Activated CD4-positive, alpha-beta T cell treated with anti-CD3 and anti-CD28 coated beads, Interleukin-2, amount 10 ng/mL, durations not matched to agents 7 days and 5 days (primary cell): ENCODE measurements at regions of chr7 and their contacts with region 1.

Region 1: GRCh38 chr7:100190048-100190711 is 12.5 kb downstream of the STAG3 start:
- DNase-seq: peak; percentile 43
- H3K4me3 Mint-ChIP-seq: no peak overlapping the region
- H3K27ac Mint-ChIP-seq: peak overlapping the region; percentile 83
- H3K4me1 Mint-ChIP-seq: peaks cover 50% of the 10 kb centered on the region
- H3K27me3 Mint-ChIP-seq: no peaks in the 10 kb centered on the region

Region 2: GRCh38 chr7:100044701-100045100 is 145.5 kb before region 1 on chr7:
- CTCF ChIA-PET with region 1: no interaction called
- POLR2A ChIA-PET with region 1: no interaction called
- DNase-seq: peak; percentile 25
- H3K4me3 Mint-ChIP-seq: no peak overlapping the region
- H3K27ac Mint-ChIP-seq: no peak overlapping the region
- H3K4me1 Mint-ChIP-seq: peaks cover 28% of the 10 kb centered on the region
- H3K27me3 Mint-ChIP-seq: no peaks in the 10 kb centered on the region

Region 3: DNA sequence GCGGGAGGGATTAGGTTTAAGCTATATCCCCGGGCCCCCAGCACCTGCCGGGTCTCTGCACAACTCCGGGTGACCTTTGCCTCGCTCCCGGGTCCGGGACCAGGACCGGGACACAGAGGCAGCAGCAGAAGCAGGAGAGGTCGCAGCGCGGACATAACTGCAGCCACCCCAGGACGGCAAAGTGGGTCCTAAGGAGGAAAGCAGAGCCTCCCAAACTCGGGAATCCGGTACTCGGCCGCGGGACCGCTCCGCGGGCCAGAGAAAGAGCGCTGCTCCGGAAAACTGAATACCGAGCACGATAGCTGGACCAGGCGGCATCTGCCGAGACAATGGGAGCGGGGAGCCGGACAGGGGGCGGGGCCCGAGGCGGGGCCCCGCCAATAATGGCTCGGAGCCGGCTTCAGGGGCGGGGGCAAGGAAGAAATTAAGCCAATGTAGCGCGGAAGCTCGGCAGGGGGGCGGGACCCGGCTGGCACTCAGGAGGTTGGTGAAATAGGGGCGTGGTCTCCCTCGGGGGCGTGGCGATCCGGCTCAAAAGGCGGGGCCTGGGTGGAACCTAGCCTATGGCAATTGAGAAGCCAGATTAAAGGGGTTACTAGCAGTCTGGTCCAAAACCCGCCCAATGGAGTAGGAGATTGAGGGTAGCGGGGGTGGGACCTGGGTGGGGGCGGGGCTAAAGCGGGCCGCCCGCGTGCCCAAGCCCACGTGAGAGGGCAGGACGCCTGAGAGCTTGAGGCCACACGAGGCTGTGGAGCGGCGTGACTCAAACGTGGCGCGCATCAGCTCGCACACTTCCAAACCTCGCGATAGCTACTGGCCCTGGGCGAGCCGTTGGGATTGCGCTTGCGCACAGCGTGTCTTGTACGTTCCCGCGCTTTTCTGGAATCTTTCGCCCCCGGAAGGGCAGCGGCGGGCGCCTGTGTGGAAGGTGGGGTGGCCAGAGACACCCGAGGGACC is 12.9 kb before region 1 on chr7 and contains the starts of genes GPC2 and STAG3:
- CTCF ChIA-PET with region 1: interaction called, 10 read pairs
- POLR2A ChIA-PET with region 1: no interaction called
- DNase-seq: peak; percentile 98
- H3K4me3 Mint-ChIP-seq: peak within 1 kb of the TSS; percentile 78
- H3K27ac Mint-ChIP-seq: peak within 1 kb of the TSS; percentile 75
- H3K4me1 Mint-ChIP-seq: peaks cover 69% of the 10 kb centered on the region
- H3K27me3 Mint-ChIP-seq: no peaks in the 10 kb centered on the region
- total RNA-seq, gene GPC2: 13.9 to 20.9 TPM
- total RNA-seq, gene STAG3: 24.2 to 24.7 TPM

Region 4: GRCh38 chr7:100271716-100272537 is 81.7 kb after region 1 on chr7:
- CTCF ChIA-PET with region 1: no interaction called
- POLR2A ChIA-PET with region 1: no interaction called
- DNase-seq: peak; percentile 99
- H3K4me3 Mint-ChIP-seq: peak overlapping the region; percentile 73
- H3K27ac Mint-ChIP-seq: peak overlapping the region; percentile 78
- H3K4me1 Mint-ChIP-seq: peaks cover 19% of the 10 kb centered on the region
- H3K27me3 Mint-ChIP-seq: peaks cover 3% of the 10 kb centered on the region